HCT116 (cell line): ENCODE measurements at regions of chr11 and their contacts with region 1.

Region 1: DNA sequence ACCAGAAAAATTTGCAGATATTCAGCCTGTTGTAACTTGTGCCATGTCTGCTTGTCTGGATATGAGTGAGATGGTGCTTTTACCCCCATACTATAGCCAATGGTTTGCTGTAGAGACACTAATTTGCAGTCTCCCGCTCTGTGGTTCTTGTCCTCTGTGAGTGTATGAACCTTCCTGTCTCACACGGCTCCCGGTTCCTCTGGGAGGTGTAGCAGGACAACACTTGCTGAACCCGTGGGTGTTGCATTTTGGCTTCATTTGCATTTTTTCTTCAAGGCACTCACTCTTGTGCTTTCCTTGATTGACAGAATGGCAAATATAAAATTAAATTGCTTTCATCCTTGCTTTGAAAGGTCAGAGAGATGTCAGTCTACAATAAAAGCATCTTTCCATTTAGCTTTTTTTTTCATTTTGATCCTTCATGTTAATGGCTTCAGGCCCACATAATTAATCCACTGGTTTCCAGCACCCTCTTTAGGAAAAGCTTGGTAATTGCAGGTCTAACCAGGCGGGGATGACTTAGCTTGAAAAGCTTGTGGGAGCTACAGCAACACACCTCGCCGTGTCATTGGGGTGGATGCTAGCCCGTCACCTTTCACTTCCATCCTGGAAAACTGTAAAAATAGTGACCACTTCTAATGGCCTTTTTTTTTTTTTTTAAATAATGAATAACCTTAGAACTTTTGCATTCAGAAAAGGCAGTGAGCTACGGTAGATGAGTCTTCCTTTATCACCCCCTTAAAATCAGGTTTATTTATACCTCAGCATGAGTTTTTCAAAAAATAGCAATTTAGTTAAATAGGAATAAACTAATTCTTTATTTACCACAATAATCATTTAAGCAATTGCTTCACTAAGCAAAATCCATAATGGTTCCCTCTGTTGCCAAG is 27.4 kb upstream of the ST14 start:
- DNase-seq: peak; percentile 53
- ATAC-seq: peak; percentile 83
- H3K4me3 ChIP-seq: no peak overlapping the region
- H3K27ac ChIP-seq: no peak overlapping the region
- H3K4me1 ChIP-seq: no peaks in the 10 kb centered on the region
- H3K27me3 ChIP-seq: no peaks in the 10 kb centered on the region
- CTCF ChIP-seq: peak; percentile 77 to 83 (median 82)
- POLR2A ChIP-seq: no peak
- RAD21 ChIP-seq: peak; percentile 93

Region 2: DNA sequence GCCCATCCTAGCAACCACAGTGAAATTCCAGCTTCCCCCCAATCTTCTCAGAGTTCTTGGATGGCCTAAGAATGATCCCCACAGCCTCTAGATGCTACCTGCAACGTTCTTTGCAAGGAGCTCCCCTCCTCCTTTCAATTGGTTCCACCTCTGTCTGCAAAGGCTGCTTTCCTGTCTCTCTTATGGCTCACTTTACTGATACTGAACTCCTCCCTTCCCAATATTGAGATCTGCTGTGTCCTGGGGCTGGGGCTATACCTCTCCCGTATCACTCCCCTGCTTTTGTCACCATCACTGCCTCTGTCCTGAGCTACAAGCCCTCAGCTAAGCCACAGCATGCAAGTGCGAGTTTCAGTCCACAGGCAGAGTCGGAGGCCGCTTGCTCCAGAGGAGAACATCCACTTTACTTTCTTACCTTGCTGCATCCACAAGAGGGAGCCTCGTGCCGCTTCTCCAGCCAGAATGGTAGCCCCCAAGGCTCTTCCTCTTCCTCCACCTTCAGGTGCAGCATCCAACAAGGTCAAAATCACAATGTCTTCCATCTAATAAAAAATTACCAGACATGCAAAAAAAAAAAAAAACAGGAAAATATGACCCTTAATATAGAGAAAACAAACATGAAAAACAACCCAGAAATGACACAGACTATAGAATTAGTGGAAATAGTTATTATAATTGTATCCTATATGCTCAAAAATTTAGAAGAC is 365.2 kb before region 1 on chr11:
- CTCF ChIA-PET with region 1: interaction called, 5 read pairs
- POLR2A ChIA-PET with region 1: no interaction called
- RAD21 ChIA-PET with region 1: no interaction called
- intact Hi-C with region 1: loop called (anchors 5 kb)
- DNase-seq: peak; percentile 44
- ATAC-seq: peak; percentile 89
- H3K4me3 ChIP-seq: no peak overlapping the region
- H3K27ac ChIP-seq: no peak overlapping the region
- H3K4me1 ChIP-seq: peaks cover 0 to 13% of the 10 kb centered on the region in 2 experiments; a peak in 1 of 4 replicates
- H3K27me3 ChIP-seq: no peaks in the 10 kb centered on the region
- CTCF ChIP-seq: peak; percentile 49 to 70 (median 61); a peak in 5 of 6 replicates
- POLR2A ChIP-seq: no peak
- RAD21 ChIP-seq: peak; percentile 72

Region 3: DNA sequence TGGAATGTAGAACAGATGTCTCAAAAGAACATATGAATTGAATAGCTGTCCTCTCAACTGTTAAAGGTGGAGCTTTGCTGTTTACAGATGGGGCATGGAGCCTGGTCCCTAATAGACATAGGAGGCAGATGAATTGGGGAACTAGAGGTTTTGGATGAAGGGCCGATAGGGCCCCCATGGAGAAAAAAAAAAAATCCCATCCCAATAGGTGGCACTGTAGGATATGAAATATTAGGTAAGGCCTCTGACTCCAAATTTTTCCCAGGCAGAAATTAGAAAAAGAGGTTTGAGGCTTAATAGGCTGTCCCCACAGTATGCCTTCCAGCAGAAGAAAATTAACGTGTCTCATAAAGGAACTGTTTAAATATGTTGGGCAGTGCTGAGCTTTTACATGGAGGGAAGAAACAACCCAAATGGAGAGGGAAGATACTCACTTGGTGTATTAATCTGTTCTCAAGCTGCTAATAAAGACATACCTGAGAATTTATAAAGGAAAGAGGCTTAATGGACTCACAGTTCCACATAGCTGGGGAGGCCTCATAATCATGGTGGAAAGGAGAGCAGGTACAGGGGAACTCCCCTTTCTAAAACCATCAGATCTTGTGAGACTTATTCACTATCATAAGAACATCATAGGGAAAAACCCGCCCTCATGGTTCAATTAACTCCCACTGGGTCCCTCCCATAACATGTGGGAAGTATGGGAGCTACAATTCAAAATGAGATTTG is 346.7 kb before region 1 on chr11:
- CTCF ChIA-PET with region 1: interaction called, 3 read pairs
- POLR2A ChIA-PET with region 1: no interaction called
- RAD21 ChIA-PET with region 1: interaction called in 1 of 2 experiments, 3 read pairs
- intact Hi-C with region 1: loop called (anchors 5 kb)
- DNase-seq: no peak
- ATAC-seq: no peak; the same call in 1 of the 2 replicates
- H3K4me3 ChIP-seq: no peak overlapping the region
- H3K27ac ChIP-seq: no peak overlapping the region
- H3K4me1 ChIP-seq: no peaks in the 10 kb centered on the region
- H3K27me3 ChIP-seq: no peaks in the 10 kb centered on the region
- CTCF ChIP-seq: peak; percentile 15 to 43 (median 27); a peak in 4 of 6 replicates
- POLR2A ChIP-seq: no peak
- RAD21 ChIP-seq: peak; percentile 59

Region 4: DNA sequence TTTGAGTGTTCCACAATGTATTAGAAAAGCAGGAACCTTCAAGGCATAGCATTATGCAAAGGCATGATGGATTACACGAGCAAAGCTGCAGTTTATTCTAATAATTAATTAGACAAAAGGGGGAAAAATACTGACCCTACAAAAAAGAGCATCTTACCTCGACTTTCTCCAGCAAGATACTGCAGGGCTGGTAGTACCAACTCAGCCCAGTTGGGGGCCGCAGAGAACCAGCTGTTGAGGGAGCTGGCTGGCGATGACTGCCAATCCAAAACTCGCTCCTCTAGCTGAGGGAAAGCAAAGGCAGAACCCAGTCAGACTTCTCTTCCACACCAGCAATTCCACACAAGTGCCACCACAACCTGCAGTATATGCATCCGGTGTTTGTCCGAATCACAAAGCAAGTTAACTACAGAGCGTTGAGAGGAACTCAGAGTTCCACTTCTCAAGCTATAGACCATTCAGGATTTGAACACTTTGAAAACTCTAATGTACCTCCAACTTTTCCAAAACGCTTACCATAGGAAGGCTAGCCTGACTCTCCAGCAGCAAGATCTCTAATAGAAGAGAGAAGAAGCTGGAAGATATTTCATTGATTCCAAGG is 250.5 kb before region 1 on chr11:
- CTCF ChIA-PET with region 1: interaction called, 24 read pairs
- POLR2A ChIA-PET with region 1: no interaction called
- RAD21 ChIA-PET with region 1: interaction called, 4 to 5 read pairs
- intact Hi-C with region 1: no loop called
- DNase-seq: no peak
- ATAC-seq: peak; percentile 89
- H3K4me3 ChIP-seq: no peak overlapping the region
- H3K27ac ChIP-seq: no peak overlapping the region
- H3K4me1 ChIP-seq: no peaks in the 10 kb centered on the region
- H3K27me3 ChIP-seq: no peaks in the 10 kb centered on the region
- CTCF ChIP-seq: peak; percentile 33 to 76 (median 73); a peak in 5 of 6 replicates
- POLR2A ChIP-seq: no peak
- RAD21 ChIP-seq: peak; percentile 56; the same call in 1 of the 2 replicates

Region 5: GRCh38 chr11:129922674-129923073 is 209.5 kb before region 1 on chr11:
- CTCF ChIA-PET with region 1: interaction called, 98 read pairs
- POLR2A ChIA-PET with region 1: no interaction called
- RAD21 ChIA-PET with region 1: interaction called, 8 to 10 read pairs
- intact Hi-C with region 1: loop called (anchors 1 kb)
- DNase-seq: no peak
- ATAC-seq: peak; percentile 68
- H3K4me3 ChIP-seq: no peak overlapping the region
- H3K27ac ChIP-seq: no peak overlapping the region
- H3K4me1 ChIP-seq: peaks cover 0 to 5% of the 10 kb centered on the region in 2 experiments; a peak in 1 of 4 replicates
- H3K27me3 ChIP-seq: no peaks in the 10 kb centered on the region
- CTCF ChIP-seq: peak in 1 of 3 experiments; percentile 15; a peak in 1 of 6 replicates
- POLR2A ChIP-seq: no peak
- RAD21 ChIP-seq: no peak

Region 6: GRCh38 chr11:129943036-129943435 is 189.2 kb before region 1 on chr11:
- CTCF ChIA-PET with region 1: no interaction called
- POLR2A ChIA-PET with region 1: no interaction called
- RAD21 ChIA-PET with region 1: no interaction called
- intact Hi-C with region 1: no loop called
- DNase-seq: no peak
- ATAC-seq: no peak
- H3K4me3 ChIP-seq: no peak overlapping the region
- H3K27ac ChIP-seq: no peak overlapping the region
- H3K4me1 ChIP-seq: no peaks in the 10 kb centered on the region
- H3K27me3 ChIP-seq: no peaks in the 10 kb centered on the region
- CTCF ChIP-seq: no peak
- POLR2A ChIP-seq: no peak
- RAD21 ChIP-seq: no peak

Region 7: GRCh38 chr11:129992161-129992944 is 139.9 kb before region 1 on chr11:
- CTCF ChIA-PET with region 1: interaction called, 70 read pairs
- POLR2A ChIA-PET with region 1: interaction called, 5 read pairs
- RAD21 ChIA-PET with region 1: interaction called, 5 to 10 read pairs
- intact Hi-C with region 1: loop called (anchors 1 kb)
- DNase-seq: peak; percentile 48
- ATAC-seq: peak; percentile 96
- H3K4me3 ChIP-seq: no peak overlapping the region
- H3K27ac ChIP-seq: no peak overlapping the region
- H3K4me1 ChIP-seq: peaks cover 12 to 20% of the 10 kb centered on the region in 2 experiments; a peak in 3 of 4 replicates
- H3K27me3 ChIP-seq: no peaks in the 10 kb centered on the region
- CTCF ChIP-seq: peak; percentile 50 to 63 (median 56); a peak in 5 of 6 replicates
- POLR2A ChIP-seq: no peak
- RAD21 ChIP-seq: peak; percentile 68

Region 8: DNA sequence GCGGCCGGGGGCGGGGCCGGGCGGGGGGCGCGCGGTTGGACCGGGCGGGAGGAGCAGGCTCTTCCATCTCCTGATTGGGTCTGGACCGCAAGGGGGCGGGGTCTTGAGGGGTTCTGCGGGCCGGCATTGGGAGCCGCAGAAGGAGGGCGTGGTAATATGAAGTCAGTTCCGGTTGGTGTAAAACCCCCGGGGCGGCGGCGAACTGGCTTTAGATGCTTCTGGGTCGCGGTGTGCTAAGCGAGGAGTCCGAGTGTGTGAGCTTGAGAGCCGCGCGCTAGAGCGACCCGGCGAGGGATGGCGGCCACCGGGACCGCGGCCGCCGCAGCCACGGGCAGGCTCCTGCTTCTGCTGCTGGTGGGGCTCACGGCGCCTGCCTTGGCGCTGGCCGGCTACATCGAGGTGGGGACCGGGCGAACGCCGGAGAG is 62.5 kb before region 1 on chr11 and contains the start of gene APLP2:
- CTCF ChIA-PET with region 1: no interaction called
- POLR2A ChIA-PET with region 1: no interaction called
- RAD21 ChIA-PET with region 1: no interaction called
- intact Hi-C with region 1: no loop called
- DNase-seq: peak; percentile 94
- ATAC-seq: peak; percentile 93
- H3K4me3 ChIP-seq: peak within 1 kb of the TSS; percentile 71 to 79
- H3K27ac ChIP-seq: peak within 1 kb of the TSS; percentile 85
- H3K4me1 ChIP-seq: peaks cover 13 to 29% of the 10 kb centered on the region in 2 experiments; a peak in 3 of 4 replicates
- H3K27me3 ChIP-seq: no peaks in the 10 kb centered on the region
- CTCF ChIP-seq: no peak
- POLR2A ChIP-seq: peak; percentile 88
- RAD21 ChIP-seq: no peak
- total RNA-seq, gene APLP2: 210 TPM

Region 9: DNA sequence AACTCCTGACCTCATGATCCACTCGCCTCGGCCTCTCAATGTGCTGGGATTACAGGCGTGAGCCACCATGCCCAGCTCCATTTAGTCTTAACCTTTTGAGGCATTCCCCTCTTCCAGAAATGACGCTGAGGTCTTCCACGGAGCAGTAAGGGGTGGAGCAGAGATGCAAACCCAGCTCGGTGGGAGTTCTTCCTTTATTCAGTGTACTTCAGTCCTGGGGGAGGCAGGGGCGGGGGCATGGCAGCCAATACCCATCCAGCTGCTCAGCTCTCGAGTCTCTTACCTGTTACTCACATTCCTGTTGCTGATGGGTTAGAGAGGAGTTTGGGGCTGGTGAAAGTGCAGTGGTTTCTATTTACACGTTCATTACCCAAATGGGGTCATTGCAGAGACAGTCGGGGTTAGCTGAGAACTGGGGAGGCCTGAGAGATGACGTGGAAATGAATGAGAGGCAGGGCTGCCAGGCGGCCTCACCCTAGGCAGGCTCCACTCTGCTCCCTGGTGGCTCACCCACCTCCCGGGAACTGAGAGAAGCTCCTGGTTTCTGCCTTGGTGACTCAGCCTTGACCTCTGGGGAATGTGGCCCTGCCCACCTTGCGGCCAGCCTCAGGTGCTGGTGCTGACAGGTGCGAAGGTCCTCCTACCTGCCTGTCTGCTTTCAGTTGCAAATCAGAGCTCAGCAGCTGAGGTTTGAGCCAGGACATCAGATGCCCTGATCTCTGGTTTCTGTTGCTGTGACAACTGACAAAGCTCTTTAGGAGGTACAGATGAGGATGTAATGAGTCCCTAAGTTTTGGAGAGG is 14.0 kb after region 1 on chr11:
- CTCF ChIA-PET with region 1: interaction called, 30 read pairs
- POLR2A ChIA-PET with region 1: interaction called, 4 read pairs
- RAD21 ChIA-PET with region 1: interaction called, 3 to 7 read pairs
- intact Hi-C with region 1: no loop called
- DNase-seq: peak; percentile 87
- ATAC-seq: peak; percentile 93
- H3K4me3 ChIP-seq: peak overlapping the region in 1 of 2 experiments; percentile 26; a peak in 2 of 4 replicates
- H3K27ac ChIP-seq: peak overlapping the region; percentile 63
- H3K4me1 ChIP-seq: peaks cover 31 to 41% of the 10 kb centered on the region in 2 experiments
- H3K27me3 ChIP-seq: no peaks in the 10 kb centered on the region
- CTCF ChIP-seq: peak; percentile 50 to 66 (median 61)
- POLR2A ChIP-seq: no peak
- RAD21 ChIP-seq: peak; percentile 70

Region 10: GRCh38 chr11:130359419-130359818 is 227.2 kb after region 1 on chr11:
- CTCF ChIA-PET with region 1: no interaction called
- POLR2A ChIA-PET with region 1: no interaction called
- RAD21 ChIA-PET with region 1: no interaction called
- intact Hi-C with region 1: no loop called
- DNase-seq: no peak
- ATAC-seq: no peak
- H3K4me3 ChIP-seq: no peak overlapping the region
- H3K27ac ChIP-seq: no peak overlapping the region
- H3K4me1 ChIP-seq: no peaks in the 10 kb centered on the region
- H3K27me3 ChIP-seq: no peaks in the 10 kb centered on the region
- CTCF ChIP-seq: no peak
- POLR2A ChIP-seq: no peak
- RAD21 ChIP-seq: no peak

Region 11: DNA sequence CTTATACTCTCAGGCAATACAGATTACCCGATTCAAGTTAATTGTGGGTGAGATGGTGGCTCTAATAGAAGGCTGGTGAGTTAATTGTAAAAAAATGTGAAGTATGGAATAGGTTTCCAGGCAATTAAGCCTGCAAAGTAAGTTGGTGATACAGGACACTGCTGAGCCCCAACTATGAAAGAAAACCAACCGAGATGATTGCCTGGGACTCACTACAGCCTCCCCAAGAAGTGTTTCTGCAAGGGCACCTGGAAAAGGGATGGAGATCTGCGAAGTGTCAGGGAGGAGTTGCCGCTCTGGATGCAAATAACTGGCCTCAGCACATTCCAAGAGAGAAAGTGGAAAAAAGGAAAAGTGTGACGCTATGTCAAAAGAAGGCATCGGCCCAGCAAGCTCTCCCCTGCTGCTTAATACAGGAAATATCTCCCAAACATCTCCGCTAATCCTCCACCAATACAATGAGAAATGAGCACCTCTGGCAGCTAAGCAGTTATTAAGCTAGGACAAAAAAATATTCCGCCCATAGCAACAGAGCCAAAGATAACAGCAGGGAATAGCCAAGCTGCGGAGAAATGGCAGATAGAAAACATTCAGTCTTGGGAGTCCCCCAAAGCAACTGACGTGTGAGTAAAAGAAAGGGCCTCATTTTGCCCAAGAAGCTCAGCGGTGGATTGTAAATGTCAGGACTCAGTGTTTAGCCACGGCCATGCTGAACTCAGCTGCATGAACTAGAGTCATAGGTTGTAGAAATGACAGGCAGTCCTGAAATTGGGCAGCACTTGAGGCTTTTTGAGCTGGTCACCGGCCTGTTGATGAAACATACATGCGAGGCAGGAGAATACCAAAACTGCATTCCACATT is 650.4 kb after region 1 on chr11:
- CTCF ChIA-PET with region 1: no interaction called
- POLR2A ChIA-PET with region 1: no interaction called
- RAD21 ChIA-PET with region 1: no interaction called
- intact Hi-C with region 1: no loop called
- DNase-seq: no peak
- ATAC-seq: no peak
- H3K4me3 ChIP-seq: no peak overlapping the region
- H3K27ac ChIP-seq: no peak overlapping the region
- H3K4me1 ChIP-seq: no peaks in the 10 kb centered on the region; a peak in 1 of 4 replicates
- H3K27me3 ChIP-seq: no peaks in the 10 kb centered on the region
- CTCF ChIP-seq: no peak
- POLR2A ChIP-seq: no peak
- RAD21 ChIP-seq: no peak